ENCODE measurements at regions of chr3 and their contacts with region 1.

Region 1: DNA sequence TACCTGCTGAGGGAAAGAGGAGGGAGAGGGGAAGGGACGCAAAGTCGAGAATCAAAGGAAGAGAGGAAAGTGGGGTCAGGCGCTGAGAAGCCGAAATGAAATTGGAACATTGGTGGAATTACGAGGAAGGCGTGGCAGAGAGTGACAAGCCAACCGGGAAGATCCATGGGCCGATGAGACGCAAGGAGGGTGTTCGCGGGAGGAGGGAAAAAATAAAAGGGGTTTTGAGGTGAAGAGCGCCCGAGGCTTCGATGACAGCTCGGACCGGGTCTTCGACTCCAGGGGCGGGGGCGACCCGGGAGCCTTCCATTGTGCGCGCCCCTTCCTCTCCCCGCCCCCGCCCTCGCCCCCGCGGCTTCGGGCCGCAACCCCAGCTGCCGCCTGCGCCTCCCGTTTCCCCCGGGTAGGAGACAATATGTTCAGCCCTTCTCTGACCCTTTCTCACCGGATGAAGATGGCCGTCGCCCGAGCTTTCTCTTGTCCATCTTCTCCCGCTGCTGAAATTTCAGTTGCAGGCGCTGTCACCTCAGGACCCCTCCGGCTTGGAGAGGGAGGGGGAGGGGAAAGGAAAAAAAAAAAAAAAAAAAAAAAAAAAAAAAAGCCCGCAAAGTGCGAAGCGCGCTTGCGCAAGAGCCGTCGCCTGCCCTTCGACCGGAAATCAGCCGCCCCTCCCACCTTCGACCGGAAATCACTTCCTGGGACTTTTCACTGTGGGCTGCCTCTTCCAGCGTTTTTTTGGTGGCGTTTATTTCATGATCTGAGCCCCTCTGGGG is at the start of gene SENP7:
- DNase-seq: peak; percentile 53 to 81
- H3K4me3 ChIP-seq: peak within 1 kb of the TSS; percentile 66 to 80 (median 78)
- H3K27ac ChIP-seq: peak within 1 kb of the TSS; percentile 33; the same call in 1 of the 2 replicates
- H3K4me1 ChIP-seq: no peaks in the 10 kb centered on the region; a peak in 3 of 7 replicates
- H3K27me3 ChIP-seq: no peaks in the 10 kb centered on the region
- CTCF ChIP-seq: no peak
- EP300 ChIP-seq: peak in 1 of 2 experiments; percentile 38; a peak in 1 of 3 replicates
- POLR2A ChIP-seq: peak in 1 of 2 experiments; percentile 16; a peak in 2 of 3 replicates
- RAD21 ChIP-seq: peak; percentile 1 to 31; a peak in 1 of 4 replicates
- total RNA-seq, gene SENP7: 6.5 and 7.8 TPM in 2 replicates

Region 2: DNA sequence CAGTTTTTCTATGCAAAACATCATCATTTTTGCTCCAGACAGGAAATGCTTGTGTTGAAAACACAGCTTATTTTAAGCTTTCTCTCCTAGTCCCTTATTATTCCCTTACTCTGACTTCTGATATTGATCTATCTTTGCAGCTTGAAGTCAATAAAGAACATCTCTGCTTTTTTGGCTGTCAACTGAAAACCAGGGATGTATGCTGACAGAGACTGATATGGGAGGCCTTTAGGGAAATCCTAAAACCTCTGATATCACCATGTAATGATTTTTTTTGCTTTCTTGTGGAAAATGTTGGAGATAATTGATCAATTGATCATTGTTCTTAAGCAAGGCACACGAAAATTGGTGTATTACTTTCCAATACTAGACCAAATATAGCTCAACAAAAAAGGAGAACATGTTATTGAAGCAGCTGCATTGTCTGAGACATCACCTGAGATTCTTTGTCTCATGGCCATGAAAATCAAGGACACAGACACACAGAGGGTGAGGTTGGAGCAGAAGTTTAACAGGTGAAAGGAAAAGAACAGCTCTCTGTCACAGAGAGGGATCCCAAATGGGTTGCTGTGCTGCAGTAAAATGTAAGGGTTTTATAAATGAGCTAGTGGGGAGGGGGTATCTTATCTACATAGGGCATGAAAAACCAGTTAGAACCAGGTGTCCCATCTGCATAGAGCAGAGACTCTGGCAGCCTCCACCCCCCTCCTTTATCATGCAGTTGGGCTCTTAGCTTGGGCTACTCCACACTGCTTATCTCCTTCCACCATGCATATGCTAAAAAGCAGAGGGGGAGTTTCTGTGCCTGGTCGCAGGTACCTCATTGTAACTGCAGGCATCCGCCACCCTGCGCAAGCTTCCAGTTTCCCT is 17.2 kb after region 1 on chr3:
- CTCF ChIA-PET with region 1: no interaction called
- POLR2A ChIA-PET with region 1: interaction called, 12 read pairs
- DNase-seq: peak; percentile 51 to 57
- H3K4me3 ChIP-seq: peak overlapping the region in 1 of 4 experiments; percentile 39; a peak in 1 of 8 replicates
- H3K27ac ChIP-seq: peak overlapping the region; percentile 65; the same call in 1 of the 2 replicates
- H3K4me1 ChIP-seq: peaks cover 6 to 21% (median 14%) of the 10 kb centered on the region in 4 experiments; a peak in 6 of 7 replicates
- H3K27me3 ChIP-seq: no peaks in the 10 kb centered on the region
- CTCF ChIP-seq: no peak
- EP300 ChIP-seq: peak in 1 of 2 experiments; percentile 50; a peak in 1 of 3 replicates
- POLR2A ChIP-seq: peak; percentile 67 to 88
- RAD21 ChIP-seq: peak; percentile 22 to 25

Measured in H1 (cell line).